ENCODE measurements at regions of chr7 and their contacts with region 1.

Region 1: DNA sequence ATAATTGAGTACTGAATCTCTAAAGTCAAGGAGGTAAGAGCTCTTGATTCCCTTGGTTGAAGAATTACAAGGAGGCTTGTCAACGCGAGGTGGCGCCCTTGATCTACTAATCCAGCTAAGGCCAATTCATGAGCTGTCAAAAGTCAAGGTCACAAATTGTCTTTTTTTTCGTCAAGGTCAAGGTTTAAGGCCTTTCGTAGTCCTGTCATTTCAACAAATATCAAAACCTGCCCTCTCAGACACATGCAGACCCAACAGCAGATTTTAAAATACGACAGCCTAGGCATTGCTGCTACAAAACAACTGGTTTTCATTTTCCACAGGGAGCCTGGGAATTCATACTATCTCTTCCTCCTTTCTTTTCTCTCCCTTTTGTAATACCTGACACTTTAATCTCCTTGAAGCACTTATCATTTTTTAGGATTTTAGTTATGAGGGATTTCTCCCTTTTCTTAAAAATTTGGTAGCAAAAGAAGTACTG is 3.6 kb downstream of the HOXA13 start:
- DNase-seq: peak; percentile 37
- H3K4me3 ChIP-seq: no peak overlapping the region
- H3K27ac ChIP-seq: no peak overlapping the region
- H3K27me3 ChIP-seq: peaks cover 83% of the 10 kb centered on the region
- CTCF ChIP-seq: peak; percentile 80

Region 2: DNA sequence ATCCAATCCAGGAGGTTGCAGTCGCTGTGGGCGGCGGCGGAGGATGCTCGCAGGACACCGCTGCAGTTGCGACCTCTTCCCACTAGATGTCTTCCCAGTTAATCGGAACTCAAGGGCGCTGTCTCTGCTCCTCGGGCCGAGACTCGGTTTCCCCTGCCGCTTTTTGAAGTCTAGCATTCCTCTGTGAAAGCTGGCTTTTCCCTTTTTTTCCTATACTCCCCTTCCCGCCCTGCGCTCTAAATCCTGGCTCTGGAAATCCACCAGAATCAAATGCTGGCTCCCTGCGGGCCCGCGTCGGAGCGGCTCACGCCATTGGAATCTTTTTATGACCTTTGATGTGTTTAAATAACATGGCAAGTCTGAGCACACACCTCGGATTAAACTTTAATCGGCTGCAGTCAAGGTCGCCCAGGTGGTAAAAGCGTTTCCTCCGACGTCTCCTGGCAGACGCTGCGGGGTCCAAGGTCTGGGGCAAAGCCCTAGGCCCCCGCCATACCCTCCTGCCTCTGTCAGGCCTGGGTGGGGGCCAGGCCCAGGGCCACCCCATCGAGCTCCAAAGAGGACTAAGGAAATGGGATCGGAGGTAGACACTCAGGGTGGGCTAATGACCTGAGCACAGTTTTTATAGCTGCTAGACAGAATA is 14.2 kb after region 1 on chr7:
- CTCF ChIA-PET with region 1: interaction called, 21 read pairs
- POLR2A ChIA-PET with region 1: interaction called, 4 read pairs
- DNase-seq: no peak
- H3K4me3 ChIP-seq: peak overlapping the region; percentile 37
- H3K27ac ChIP-seq: no peak overlapping the region
- H3K27me3 ChIP-seq: peaks cover 98% of the 10 kb centered on the region
- CTCF ChIP-seq: peak; percentile 81

Region 3: GRCh38 chr7:27605689-27606269 is 409.5 kb after region 1 on chr7:
- CTCF ChIA-PET with region 1: interaction called, 41 read pairs
- POLR2A ChIA-PET with region 1: no interaction called
- DNase-seq: no peak
- H3K4me3 ChIP-seq: no peak overlapping the region
- H3K27ac ChIP-seq: no peak overlapping the region
- H3K27me3 ChIP-seq: no peaks in the 10 kb centered on the region
- CTCF ChIP-seq: peak; percentile 57

Region 4: DNA sequence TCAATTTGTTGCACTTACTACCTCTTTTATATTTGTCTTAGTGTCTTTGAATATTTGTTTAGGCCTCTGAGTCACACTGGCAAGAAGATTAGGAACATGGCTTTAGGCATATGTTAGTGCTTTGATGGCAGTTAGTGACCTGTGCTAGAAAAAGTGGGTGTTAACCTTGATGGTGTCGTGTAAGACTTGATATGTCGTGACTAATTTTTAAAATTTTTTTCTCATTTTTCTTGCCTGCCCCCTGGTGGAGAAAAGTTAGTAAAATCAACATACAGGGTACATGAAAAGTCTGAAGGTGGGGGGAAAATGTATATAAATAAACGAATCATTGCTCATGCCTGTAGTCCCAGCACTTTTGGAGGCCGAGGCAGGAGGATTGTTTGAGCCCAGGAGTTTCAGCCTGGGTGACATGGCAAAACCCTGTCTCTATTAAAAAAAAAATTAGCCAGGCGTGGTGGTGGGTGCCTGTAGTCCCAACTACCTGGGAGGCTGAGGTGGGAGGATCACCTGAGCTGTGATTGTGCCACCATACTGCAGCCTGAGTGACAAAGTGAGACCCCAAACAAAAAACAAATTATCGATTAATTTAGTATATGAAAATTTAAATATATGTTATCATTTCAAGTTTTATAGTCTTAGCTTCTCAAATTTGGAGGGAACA is 588.2 kb after region 1 on chr7:
- CTCF ChIA-PET with region 1: interaction called, 12 read pairs
- POLR2A ChIA-PET with region 1: no interaction called
- DNase-seq: no peak
- H3K4me3 ChIP-seq: no peak overlapping the region
- H3K27ac ChIP-seq: no peak overlapping the region
- H3K27me3 ChIP-seq: no peaks in the 10 kb centered on the region
- CTCF ChIP-seq: peak; percentile 61

Region 5: GRCh38 chr7:28020302-28020940 is 824.1 kb after region 1 on chr7:
- CTCF ChIA-PET with region 1: interaction called, 21 read pairs
- POLR2A ChIA-PET with region 1: no interaction called
- DNase-seq: peak; percentile 46
- H3K4me3 ChIP-seq: no peak overlapping the region
- H3K27ac ChIP-seq: no peak overlapping the region
- H3K27me3 ChIP-seq: no peaks in the 10 kb centered on the region
- CTCF ChIP-seq: peak; percentile 87

Region 6: GRCh38 chr7:28083164-28083997 is 887.1 kb after region 1 on chr7:
- CTCF ChIA-PET with region 1: interaction called, 28 read pairs
- POLR2A ChIA-PET with region 1: no interaction called
- DNase-seq: no peak
- H3K4me3 ChIP-seq: no peak overlapping the region
- H3K27ac ChIP-seq: no peak overlapping the region
- H3K27me3 ChIP-seq: no peaks in the 10 kb centered on the region
- CTCF ChIP-seq: no peak

Measured in AG04450 (cell line).